ENCODE measurements at regions of chr3 and their contacts with region 1.

Region 1: GRCh38 chr3:57151021-57151449 is 14.1 kb downstream of the IL17RD start:
- DNase-seq: peak; percentile 80
- H3K4me3 ChIP-seq: peak overlapping the region in 1 of 3 experiments; percentile 1
- H3K27ac ChIP-seq: no peak overlapping the region
- H3K4me1 ChIP-seq: peaks cover 17% of the 10 kb centered on the region
- H3K27me3 ChIP-seq: peaks cover 41 to 51% of the 10 kb centered on the region in 2 experiments
- CTCF ChIP-seq: no peak
- POLR2A ChIP-seq: no peak

Region 2: GRCh38 chr3:56983427-56983826 is 167.6 kb before region 1 on chr3:
- CTCF ChIA-PET with region 1: no interaction called
- POLR2A ChIA-PET with region 1: no interaction called
- dilution Hi-C with region 1: no loop called
- intact Hi-C with region 1: no loop called
- DNase-seq: no peak
- H3K4me3 ChIP-seq: no peak overlapping the region
- H3K27ac ChIP-seq: no peak overlapping the region
- H3K4me1 ChIP-seq: peaks cover 20% of the 10 kb centered on the region
- H3K27me3 ChIP-seq: no peaks in the 10 kb centered on the region
- CTCF ChIP-seq: no peak
- POLR2A ChIP-seq: no peak

Region 3: GRCh38 chr3:57130571-57131209 is 20.3 kb before region 1 on chr3:
- CTCF ChIA-PET with region 1: interaction called, 3 read pairs
- POLR2A ChIA-PET with region 1: no interaction called
- dilution Hi-C with region 1: no loop called
- intact Hi-C with region 1: loop called (anchors 2 kb)
- DNase-seq: no peak
- H3K4me3 ChIP-seq: no peak overlapping the region
- H3K27ac ChIP-seq: no peak overlapping the region
- H3K4me1 ChIP-seq: peaks cover 4% of the 10 kb centered on the region
- H3K27me3 ChIP-seq: peaks cover 14 to 28% of the 10 kb centered on the region in 2 experiments
- CTCF ChIP-seq: no peak
- POLR2A ChIP-seq: no peak

Region 4: DNA sequence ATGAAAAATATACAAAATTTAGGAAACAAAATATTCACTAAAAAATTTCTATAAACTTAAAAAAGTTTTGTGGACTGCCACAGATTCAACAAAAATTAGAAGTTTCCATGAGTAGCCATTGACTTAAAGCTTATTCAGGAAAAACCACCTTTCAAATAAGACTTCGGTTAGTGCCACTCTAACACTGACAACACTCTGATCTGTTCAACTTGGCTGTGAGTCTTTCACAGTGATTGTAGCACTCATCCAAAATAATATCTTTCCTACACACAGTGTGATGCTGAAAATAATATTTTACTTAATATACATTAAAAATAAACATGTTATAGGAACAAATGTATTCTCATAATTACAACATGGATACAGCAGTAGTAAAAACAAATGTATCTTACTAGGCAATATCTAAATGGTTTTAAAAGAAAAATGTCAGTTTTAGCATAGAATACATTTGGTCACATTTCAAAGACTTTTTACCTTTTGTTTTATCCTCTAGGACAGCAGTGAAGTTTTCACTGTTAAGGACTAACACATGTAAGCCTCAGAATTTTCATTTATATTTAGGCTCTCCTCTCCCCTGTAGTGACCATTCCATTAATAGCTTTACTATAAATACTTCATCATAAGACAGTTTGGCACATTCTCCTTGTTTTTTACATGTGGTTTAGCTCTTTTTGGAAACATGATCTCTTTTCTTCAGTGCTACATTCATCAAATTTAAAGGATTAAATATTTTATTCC is 141.3 kb after region 1 on chr3 and contains the start of gene ASB14:
- CTCF ChIA-PET with region 1: no interaction called
- POLR2A ChIA-PET with region 1: interaction called, 11 read pairs
- dilution Hi-C with region 1: no loop called
- intact Hi-C with region 1: no loop called
- DNase-seq: no peak
- H3K4me3 ChIP-seq: no peak within 1 kb of the TSS
- H3K27ac ChIP-seq: no peak within 1 kb of the TSS
- H3K4me1 ChIP-seq: no peaks in the 10 kb centered on the region
- H3K27me3 ChIP-seq: no peaks in the 10 kb centered on the region
- CTCF ChIP-seq: no peak
- POLR2A ChIP-seq: no peak
- total RNA-seq, gene ASB14: not detected in 2 replicates